ENCODE measurements at regions of chr12 and their contacts with region 1.

Region 1: GRCh38 chr12:71415336-71416231 is 24.0 kb upstream of the LGR5 start:
- DNase-seq: no peak
- ATAC-seq: peak; percentile 86 to 97 (median 92)
- H3K4me3 ChIP-seq: no peak overlapping the region
- H3K27ac ChIP-seq: no peak overlapping the region
- H3K4me1 ChIP-seq: no peaks in the 10 kb centered on the region
- H3K27me3 ChIP-seq: no peaks in the 10 kb centered on the region
- CTCF ChIP-seq: peak; percentile 85

Region 2: GRCh38 chr12:71282020-71282419 is 133.6 kb before region 1 on chr12:
- intact Hi-C with region 1: no loop called
- DNase-seq: no peak
- ATAC-seq: no peak
- H3K4me3 ChIP-seq: no peak overlapping the region
- H3K27ac ChIP-seq: no peak overlapping the region
- H3K4me1 ChIP-seq: no peaks in the 10 kb centered on the region
- H3K27me3 ChIP-seq: no peaks in the 10 kb centered on the region
- CTCF ChIP-seq: no peak

Region 3: DNA sequence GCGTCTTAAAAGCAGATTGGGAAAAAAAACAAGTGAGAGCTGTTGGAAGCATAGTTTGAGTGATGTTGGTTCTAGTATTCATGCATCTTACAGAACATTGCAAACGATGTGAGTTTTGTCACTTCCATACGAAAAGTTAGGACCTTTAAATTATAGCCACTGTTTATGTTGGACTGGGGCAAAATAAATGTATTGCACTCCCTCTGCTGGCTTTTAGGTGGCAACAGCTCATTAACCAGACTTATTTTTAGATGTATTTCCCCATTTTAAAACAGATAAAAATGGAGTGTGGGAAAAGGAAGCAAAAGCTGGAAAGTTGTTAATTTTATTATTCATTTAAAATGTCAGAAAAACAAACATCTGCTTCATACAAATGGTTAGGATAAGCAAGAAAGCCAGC is 135.9 kb after region 1 on chr12:
- intact Hi-C with region 1: loop called (anchors 5 to 10 kb)
- DNase-seq: no peak
- ATAC-seq: no peak
- H3K4me3 ChIP-seq: no peak overlapping the region
- H3K27ac ChIP-seq: no peak overlapping the region
- H3K4me1 ChIP-seq: no peaks in the 10 kb centered on the region
- H3K27me3 ChIP-seq: no peaks in the 10 kb centered on the region
- CTCF ChIP-seq: peak; percentile 30

Region 4: DNA sequence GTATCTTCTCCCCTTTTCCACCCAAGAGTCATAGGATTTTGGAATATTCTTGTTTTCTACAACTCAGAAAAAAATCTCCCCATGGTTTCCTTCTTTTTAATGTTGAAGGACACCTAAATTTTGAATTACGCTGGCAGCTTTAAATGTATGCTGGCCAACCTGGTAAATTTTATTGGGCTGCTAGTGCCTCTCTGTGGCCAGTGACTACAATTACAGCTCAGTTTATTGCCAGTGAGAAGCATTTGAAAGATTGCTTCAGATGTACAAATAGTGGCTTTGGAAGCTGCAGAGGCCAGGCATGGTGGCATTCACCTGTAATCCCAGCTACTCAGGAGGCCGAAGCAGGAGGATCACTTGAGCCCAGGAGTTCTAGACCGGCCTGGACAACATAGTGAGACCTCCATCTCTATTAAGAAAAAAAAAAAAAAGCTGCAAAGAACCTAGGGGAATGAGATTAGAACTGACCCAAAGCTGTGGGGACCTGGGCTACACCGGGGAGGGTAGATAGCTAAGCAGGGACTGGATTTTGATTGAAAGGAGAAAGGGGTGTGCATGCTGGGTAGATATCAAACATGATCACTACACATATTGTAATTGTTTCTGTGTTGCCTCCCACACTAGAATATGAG is 331.5 kb after region 1 on chr12:
- intact Hi-C with region 1: loop called (anchors 5 kb)
- DNase-seq: no peak
- ATAC-seq: peak; percentile 81 to 99 (median 94)
- H3K4me3 ChIP-seq: no peak overlapping the region
- H3K27ac ChIP-seq: no peak overlapping the region
- H3K4me1 ChIP-seq: no peaks in the 10 kb centered on the region
- H3K27me3 ChIP-seq: no peaks in the 10 kb centered on the region
- CTCF ChIP-seq: peak; percentile 71

Region 5: DNA sequence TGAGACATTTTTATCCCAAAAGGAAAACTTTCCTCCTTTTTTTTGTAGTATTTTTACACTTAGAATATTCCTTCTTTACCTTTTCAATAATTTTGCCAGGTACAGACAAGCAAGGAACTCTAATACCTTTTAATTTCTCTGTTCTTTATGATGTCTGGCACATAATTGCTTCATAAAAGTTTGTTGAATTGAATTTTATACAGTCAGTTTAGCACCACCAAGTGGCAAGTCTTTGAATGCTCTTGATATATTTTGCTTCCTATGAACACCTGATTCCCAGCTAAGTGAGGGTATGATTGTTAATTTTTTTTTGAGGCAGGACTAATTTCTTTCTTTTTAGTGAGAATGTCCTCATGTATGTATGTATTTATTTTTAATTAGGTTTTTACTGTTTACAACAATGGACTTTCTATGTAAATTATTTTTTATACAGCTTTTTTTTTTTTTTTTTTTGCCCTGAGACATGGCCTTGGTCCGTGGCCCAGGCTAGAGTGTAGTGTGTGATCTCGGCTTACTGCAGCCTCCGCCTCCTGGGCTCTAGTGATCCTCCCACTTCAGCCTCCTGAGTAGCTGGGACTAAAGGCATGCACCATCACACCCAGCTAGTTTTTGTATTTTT is 430.8 kb after region 1 on chr12:
- intact Hi-C with region 1: no loop called
- DNase-seq: no peak
- ATAC-seq: no peak
- H3K4me3 ChIP-seq: no peak overlapping the region
- H3K27ac ChIP-seq: peak overlapping the region; percentile 88
- H3K4me1 ChIP-seq: peaks cover 79% of the 10 kb centered on the region
- H3K27me3 ChIP-seq: no peaks in the 10 kb centered on the region
- CTCF ChIP-seq: peak; percentile 62

Measured in psoas muscle (tissue), 8 donors.